ENCODE measurements at regions of chr11 and their contacts with region 1.

Region 1: GRCh38 chr11:47552566-47553416 is at the start of gene CELF1:
- DNase-seq: peak; percentile 93
- ATAC-seq: peak; percentile 94
- H3K4me3 Mint-ChIP-seq: peak within 1 kb of the TSS; percentile 96
- H3K27ac Mint-ChIP-seq: peak within 1 kb of the TSS; percentile 97
- H3K4me1 Mint-ChIP-seq: peaks cover 49% of the 10 kb centered on the region
- H3K27me3 Mint-ChIP-seq: no peaks in the 10 kb centered on the region
- CTCF ChIP-seq: peak; percentile 33
- total RNA-seq, gene CELF1: 129 and 136 TPM in 2 replicates

Region 2: GRCh38 chr11:47269002-47269828 is 283.6 kb before region 1 on chr11:
- CTCF ChIA-PET with region 1: no interaction called
- POLR2A ChIA-PET with region 1: no interaction called
- intact Hi-C with region 1: loop called (anchors 1 kb)
- DNase-seq: peak; percentile 88
- ATAC-seq: peak; percentile 62
- H3K4me3 Mint-ChIP-seq: peak overlapping the region; percentile 93
- H3K27ac Mint-ChIP-seq: peak overlapping the region; percentile 97
- H3K4me1 Mint-ChIP-seq: peaks cover 59% of the 10 kb centered on the region
- H3K27me3 Mint-ChIP-seq: no peaks in the 10 kb centered on the region
- CTCF ChIP-seq: no peak

Region 3: GRCh38 chr11:47285969-47286770 is 266.6 kb before region 1 on chr11:
- CTCF ChIA-PET with region 1: no interaction called
- POLR2A ChIA-PET with region 1: no interaction called
- intact Hi-C with region 1: no loop called
- DNase-seq: no peak
- ATAC-seq: no peak
- H3K4me3 Mint-ChIP-seq: no peak overlapping the region
- H3K27ac Mint-ChIP-seq: no peak overlapping the region
- H3K4me1 Mint-ChIP-seq: no peaks in the 10 kb centered on the region
- H3K27me3 Mint-ChIP-seq: no peaks in the 10 kb centered on the region
- CTCF ChIP-seq: no peak

Region 4: GRCh38 chr11:47464483-47464882 is 88.3 kb before region 1 on chr11:
- CTCF ChIA-PET with region 1: no interaction called
- POLR2A ChIA-PET with region 1: no interaction called
- intact Hi-C with region 1: no loop called
- DNase-seq: no peak
- ATAC-seq: no peak
- H3K4me3 Mint-ChIP-seq: no peak overlapping the region
- H3K27ac Mint-ChIP-seq: no peak overlapping the region
- H3K4me1 Mint-ChIP-seq: no peaks in the 10 kb centered on the region
- H3K27me3 Mint-ChIP-seq: no peaks in the 10 kb centered on the region
- CTCF ChIP-seq: no peak

Region 5: DNA sequence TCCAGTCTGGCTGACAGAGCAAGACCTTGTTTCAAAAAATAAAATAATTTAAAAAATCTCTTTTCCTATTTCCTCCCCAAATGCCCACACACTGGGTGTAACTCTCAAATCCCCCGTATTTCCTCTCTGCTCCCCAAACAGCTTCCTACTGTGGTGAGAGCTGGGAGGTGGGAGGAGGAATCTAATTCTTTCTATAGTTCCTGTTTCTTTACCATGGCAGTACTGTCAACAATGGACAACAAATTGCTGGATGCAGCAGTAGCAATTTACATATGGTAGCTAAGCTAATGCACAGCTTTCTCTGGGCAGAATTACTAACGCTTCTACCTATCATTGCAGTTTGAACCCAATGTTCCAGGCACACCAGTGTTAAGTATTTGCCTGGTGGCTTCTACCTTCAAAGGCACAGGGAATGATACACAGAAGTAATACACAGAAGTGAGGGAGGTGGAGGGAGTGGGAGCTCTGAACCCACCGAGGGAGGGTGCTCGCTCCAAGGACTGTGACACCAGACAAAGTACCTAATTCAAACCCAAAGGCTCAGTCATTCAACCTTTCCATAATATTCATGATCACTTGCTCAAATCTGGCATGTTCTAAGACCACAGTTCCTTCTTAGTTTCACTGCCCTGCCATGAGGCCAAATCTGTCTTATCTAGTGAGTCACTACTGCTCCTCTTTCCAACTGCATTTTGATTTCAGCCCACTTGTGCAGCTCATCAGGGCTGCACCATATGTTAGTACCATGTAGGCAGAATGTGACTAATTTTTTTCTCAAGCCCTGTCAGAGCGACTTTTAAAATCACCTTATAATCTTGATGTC is 37.8 kb before region 1 on chr11:
- CTCF ChIA-PET with region 1: interaction called, 3 read pairs
- POLR2A ChIA-PET with region 1: interaction called, 6 read pairs
- intact Hi-C with region 1: loop called (anchors 1 kb)
- DNase-seq: no peak
- ATAC-seq: peak; percentile 41
- H3K4me3 Mint-ChIP-seq: peak overlapping the region; percentile 68
- H3K27ac Mint-ChIP-seq: peak overlapping the region; percentile 65
- H3K4me1 Mint-ChIP-seq: peaks cover 86% of the 10 kb centered on the region
- H3K27me3 Mint-ChIP-seq: no peaks in the 10 kb centered on the region
- CTCF ChIP-seq: no peak

Region 6: GRCh38 chr11:47565340-47566148 is 12.8 kb after region 1 on chr11 and contains the start of gene PTPMT1:
- CTCF ChIA-PET with region 1: interaction called, 4 read pairs
- POLR2A ChIA-PET with region 1: interaction called, 29 read pairs
- intact Hi-C with region 1: loop called (anchors 1 kb)
- DNase-seq: peak; percentile 66
- ATAC-seq: peak; percentile 95
- H3K4me3 Mint-ChIP-seq: peak within 1 kb of the TSS; percentile 84
- H3K27ac Mint-ChIP-seq: peak within 1 kb of the TSS; percentile 54
- H3K4me1 Mint-ChIP-seq: peaks cover 18% of the 10 kb centered on the region
- H3K27me3 Mint-ChIP-seq: no peaks in the 10 kb centered on the region
- CTCF ChIP-seq: no peak
- total RNA-seq, gene PTPMT1: 27.1 and 32.8 TPM in 2 replicates

Region 7: GRCh38 chr11:47642099-47642855 is 89.5 kb after region 1 on chr11 and contains the start of gene MTCH2:
- CTCF ChIA-PET with region 1: no interaction called
- POLR2A ChIA-PET with region 1: no interaction called
- intact Hi-C with region 1: loop called (anchors 1 kb)
- DNase-seq: peak; percentile 95
- ATAC-seq: peak; percentile 94
- H3K4me3 Mint-ChIP-seq: peak within 1 kb of the TSS; percentile 94
- H3K27ac Mint-ChIP-seq: peak within 1 kb of the TSS; percentile 95
- H3K4me1 Mint-ChIP-seq: peaks cover 25% of the 10 kb centered on the region
- H3K27me3 Mint-ChIP-seq: no peaks in the 10 kb centered on the region
- CTCF ChIP-seq: no peak
- total RNA-seq, gene MTCH2: 73.3 and 81.7 TPM in 2 replicates

Region 8: GRCh38 chr11:47766305-47767227 is 213.8 kb after region 1 on chr11:
- CTCF ChIA-PET with region 1: no interaction called
- POLR2A ChIA-PET with region 1: interaction called, 3 read pairs
- intact Hi-C with region 1: loop called (anchors 1 kb)
- DNase-seq: peak; percentile 63
- ATAC-seq: peak; percentile 20
- H3K4me3 Mint-ChIP-seq: peak overlapping the region; percentile 97
- H3K27ac Mint-ChIP-seq: peak overlapping the region; percentile 100
- H3K4me1 Mint-ChIP-seq: peaks cover 33% of the 10 kb centered on the region
- H3K27me3 Mint-ChIP-seq: no peaks in the 10 kb centered on the region
- CTCF ChIP-seq: no peak

Region 9: DNA sequence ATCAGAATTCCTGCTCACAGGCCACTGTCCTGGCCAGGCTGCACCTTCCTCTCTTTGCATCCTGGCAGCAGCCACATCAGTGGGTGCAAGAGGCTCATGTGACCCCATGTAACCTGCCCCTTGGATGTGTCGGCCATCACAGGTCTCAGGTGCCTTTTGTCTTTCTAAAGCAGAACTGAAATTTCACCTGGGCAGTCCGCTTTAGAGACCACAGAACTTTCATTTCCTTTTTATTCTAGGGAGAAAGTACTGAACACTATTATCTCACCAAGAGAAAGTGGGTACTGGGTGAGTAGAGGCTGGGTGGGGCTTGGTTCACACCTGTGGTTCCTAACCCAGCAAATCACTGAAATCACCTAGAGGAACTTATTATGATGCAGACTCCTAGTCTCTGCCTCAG is 347.0 kb after region 1 on chr11:
- CTCF ChIA-PET with region 1: no interaction called
- POLR2A ChIA-PET with region 1: no interaction called
- intact Hi-C with region 1: no loop called
- DNase-seq: no peak
- ATAC-seq: peak; percentile 94
- H3K4me3 Mint-ChIP-seq: no peak overlapping the region
- H3K27ac Mint-ChIP-seq: peak overlapping the region; percentile 83
- H3K4me1 Mint-ChIP-seq: peaks cover 48% of the 10 kb centered on the region
- H3K27me3 Mint-ChIP-seq: no peaks in the 10 kb centered on the region
- CTCF ChIP-seq: no peak